AG04450 (cell line): ENCODE measurements at regions of chr12 and their contacts with region 1.

Region 1: DNA sequence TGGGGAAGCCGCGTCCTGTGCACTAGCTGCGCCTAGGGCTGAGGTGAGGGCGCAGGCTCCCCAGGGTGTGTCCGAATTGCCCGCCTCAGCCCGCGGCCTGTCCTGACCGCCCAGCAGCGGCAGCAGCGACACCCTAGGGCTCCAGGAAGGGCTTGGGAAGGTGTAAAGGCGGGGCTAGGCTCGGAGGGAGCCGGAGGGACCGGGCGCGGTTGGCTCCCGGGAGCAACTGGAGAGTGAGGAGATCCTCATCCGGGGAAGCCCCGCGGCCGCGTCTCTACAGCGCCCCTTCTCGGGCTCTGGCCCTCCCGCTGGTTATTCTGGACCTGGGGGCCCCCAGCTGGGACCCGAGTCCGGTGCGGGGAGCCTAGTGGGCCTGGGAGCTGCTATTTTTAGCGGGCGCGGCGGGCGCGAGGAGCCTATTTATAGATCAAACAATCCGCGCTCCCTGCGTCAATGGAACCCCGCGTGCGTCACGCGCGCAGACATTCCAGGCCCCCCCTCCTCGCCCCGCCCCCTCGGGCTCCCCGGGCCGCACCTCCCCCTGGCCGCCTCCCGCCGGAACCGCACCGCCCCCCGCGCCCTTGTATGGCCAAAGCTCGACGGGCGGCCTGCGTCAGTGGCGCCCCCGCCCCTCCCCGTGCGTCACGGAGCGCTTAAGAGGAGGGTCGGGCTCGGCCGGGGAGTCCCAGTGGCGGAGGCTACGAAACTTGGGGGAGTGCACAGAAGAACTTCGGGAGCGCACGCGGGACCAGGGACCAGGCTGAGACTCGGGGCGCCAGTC is at the start of gene NR4A1:
- DNase-seq: peak; percentile 88
- H3K4me3 ChIP-seq: peak within 1 kb of the TSS; percentile 79
- H3K27ac ChIP-seq: peak within 1 kb of the TSS; percentile 98
- H3K27me3 ChIP-seq: no peaks in the 10 kb centered on the region
- CTCF ChIP-seq: no peak
- polyA plus RNA-seq, gene NR4A1: 4.4 and 6.9 TPM in 2 replicates

Region 2: DNA sequence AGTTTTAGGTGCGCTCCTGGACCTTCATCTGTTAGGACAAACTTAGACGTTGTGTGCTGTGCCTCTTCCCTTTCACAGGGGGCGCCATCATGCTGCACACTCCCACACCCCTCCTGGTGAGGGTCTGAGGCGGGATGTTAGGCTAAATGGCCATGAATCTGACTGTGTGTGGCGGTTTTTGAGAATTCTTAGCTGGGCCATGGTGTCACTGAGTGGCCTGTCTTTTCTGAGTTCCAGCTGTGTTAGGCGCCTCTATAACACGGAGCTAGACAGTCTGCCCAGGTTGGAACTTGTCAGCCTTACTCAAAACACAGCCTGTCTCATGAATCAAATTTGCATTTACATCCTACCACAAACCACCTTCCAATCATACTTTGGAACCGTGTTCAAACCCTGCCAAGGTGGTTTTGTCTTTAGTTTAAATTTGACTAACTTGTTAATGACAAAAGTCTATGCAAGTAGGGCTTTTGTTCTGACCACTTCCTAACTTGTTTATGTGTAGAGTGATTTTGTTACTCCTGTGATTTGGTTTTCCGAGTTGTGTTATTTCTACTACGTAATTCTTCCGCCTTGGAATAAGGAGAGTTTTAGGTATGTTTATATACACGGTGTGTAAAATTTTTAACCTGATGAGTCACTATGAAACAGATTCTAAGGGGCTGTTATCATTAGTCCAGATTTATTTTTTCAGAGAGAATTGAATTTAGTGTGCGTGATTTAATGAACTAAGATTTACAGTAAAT is 79.9 kb before region 1 on chr12:
- CTCF ChIA-PET with region 1: no interaction called
- POLR2A ChIA-PET with region 1: no interaction called
- DNase-seq: no peak
- H3K4me3 ChIP-seq: peak overlapping the region; percentile 5; the same call in 1 of the 2 replicates
- H3K27ac ChIP-seq: peak overlapping the region; percentile 79
- H3K27me3 ChIP-seq: no peaks in the 10 kb centered on the region
- CTCF ChIP-seq: peak; percentile 83

Region 3: GRCh38 chr12:52032804-52033502 is 18.0 kb before region 1 on chr12:
- CTCF ChIA-PET with region 1: interaction called, 13 read pairs
- POLR2A ChIA-PET with region 1: interaction called, 30 read pairs
- DNase-seq: peak; percentile 88
- H3K4me3 ChIP-seq: peak overlapping the region; percentile 53
- H3K27ac ChIP-seq: peak overlapping the region; percentile 82
- H3K27me3 ChIP-seq: no peaks in the 10 kb centered on the region
- CTCF ChIP-seq: no peak

Region 4: DNA sequence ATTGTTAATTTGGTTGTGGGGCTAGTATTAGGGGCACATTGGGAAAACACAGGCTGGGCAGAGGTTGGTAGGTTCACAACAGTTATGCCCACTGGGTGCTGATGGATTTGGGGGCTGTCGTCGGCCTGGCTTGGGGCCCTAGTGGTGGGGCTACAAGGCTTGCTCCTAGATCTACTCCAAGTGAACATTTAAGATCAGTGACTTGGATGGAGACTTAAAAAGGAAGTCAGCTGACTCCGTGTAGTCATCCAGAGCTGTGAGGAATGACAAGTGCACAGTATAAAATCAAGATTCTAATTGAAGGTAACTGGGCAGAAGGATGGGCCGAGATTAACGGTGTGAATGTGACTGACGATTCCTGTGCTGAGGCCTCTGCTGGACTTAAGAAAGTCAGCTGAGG is 12.5 kb before region 1 on chr12:
- CTCF ChIA-PET with region 1: interaction called, 13 read pairs
- POLR2A ChIA-PET with region 1: interaction called, 30 read pairs
- DNase-seq: no peak
- H3K4me3 ChIP-seq: no peak overlapping the region
- H3K27ac ChIP-seq: no peak overlapping the region
- H3K27me3 ChIP-seq: no peaks in the 10 kb centered on the region
- CTCF ChIP-seq: no peak

Region 5: GRCh38 chr12:52151859-52152783 is 101.2 kb after region 1 on chr12:
- CTCF ChIA-PET with region 1: no interaction called
- POLR2A ChIA-PET with region 1: no interaction called
- DNase-seq: no peak
- H3K4me3 ChIP-seq: peak overlapping the region; percentile 43
- H3K27ac ChIP-seq: no peak overlapping the region
- H3K27me3 ChIP-seq: no peaks in the 10 kb centered on the region
- CTCF ChIP-seq: peak; percentile 68

Region 6: DNA sequence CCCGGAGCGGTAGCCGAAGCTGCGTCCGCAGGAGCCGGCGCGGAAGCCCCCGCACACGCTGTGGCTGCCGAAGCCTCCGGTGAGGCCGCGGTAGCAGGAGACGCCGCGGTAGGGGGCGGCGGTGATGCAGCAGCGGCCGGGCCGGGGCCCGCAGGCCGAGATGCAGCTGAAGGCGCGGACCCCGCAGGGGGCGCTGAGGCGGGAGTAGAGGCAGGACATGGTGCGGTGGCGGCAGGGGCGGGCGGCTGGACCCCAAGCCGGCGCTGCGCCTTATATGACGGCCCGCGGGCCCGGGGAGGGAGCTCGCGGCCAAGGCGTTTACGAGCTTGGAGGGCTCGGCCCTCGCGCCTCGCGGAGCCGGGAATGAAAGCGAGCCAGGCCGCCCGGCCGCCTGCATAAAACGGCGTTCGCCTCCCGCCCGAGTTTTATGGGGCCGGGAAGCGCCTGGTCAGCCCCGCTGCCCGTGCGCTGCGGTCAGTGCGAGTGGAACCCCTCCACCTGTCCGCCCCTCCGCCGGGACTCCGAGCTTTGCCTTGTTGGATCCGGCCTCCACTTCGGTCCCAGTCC is 207.5 kb after region 1 on chr12:
- CTCF ChIA-PET with region 1: no interaction called
- POLR2A ChIA-PET with region 1: no interaction called
- DNase-seq: no peak
- H3K4me3 ChIP-seq: peak overlapping the region; percentile 17; the same call in 1 of the 2 replicates
- H3K27ac ChIP-seq: no peak overlapping the region
- H3K27me3 ChIP-seq: peaks cover 52% of the 10 kb centered on the region
- CTCF ChIP-seq: no peak